ENCODE measurements at regions of chr15 and their contacts with region 1.

Region 1: GRCh38 chr15:25508369-25509002 is 69.7 kb upstream of the UBE3A start:
- DNase-seq: peak; percentile 6
- H3K4me3 Mint-ChIP-seq: no peak overlapping the region
- H3K27ac Mint-ChIP-seq: no peak overlapping the region
- H3K4me1 Mint-ChIP-seq: no peaks in the 10 kb centered on the region
- H3K27me3 Mint-ChIP-seq: peaks cover 2% of the 10 kb centered on the region

Region 2: GRCh38 chr15:25179673-25180511 is 328.6 kb before region 1 on chr15:
- CTCF ChIA-PET with region 1: no interaction called
- intact Hi-C with region 1: loop called (anchors 10 kb)
- DNase-seq: no peak
- H3K4me3 Mint-ChIP-seq: no peak overlapping the region
- H3K27ac Mint-ChIP-seq: no peak overlapping the region
- H3K4me1 Mint-ChIP-seq: no peaks in the 10 kb centered on the region
- H3K27me3 Mint-ChIP-seq: no peaks in the 10 kb centered on the region

Region 3: DNA sequence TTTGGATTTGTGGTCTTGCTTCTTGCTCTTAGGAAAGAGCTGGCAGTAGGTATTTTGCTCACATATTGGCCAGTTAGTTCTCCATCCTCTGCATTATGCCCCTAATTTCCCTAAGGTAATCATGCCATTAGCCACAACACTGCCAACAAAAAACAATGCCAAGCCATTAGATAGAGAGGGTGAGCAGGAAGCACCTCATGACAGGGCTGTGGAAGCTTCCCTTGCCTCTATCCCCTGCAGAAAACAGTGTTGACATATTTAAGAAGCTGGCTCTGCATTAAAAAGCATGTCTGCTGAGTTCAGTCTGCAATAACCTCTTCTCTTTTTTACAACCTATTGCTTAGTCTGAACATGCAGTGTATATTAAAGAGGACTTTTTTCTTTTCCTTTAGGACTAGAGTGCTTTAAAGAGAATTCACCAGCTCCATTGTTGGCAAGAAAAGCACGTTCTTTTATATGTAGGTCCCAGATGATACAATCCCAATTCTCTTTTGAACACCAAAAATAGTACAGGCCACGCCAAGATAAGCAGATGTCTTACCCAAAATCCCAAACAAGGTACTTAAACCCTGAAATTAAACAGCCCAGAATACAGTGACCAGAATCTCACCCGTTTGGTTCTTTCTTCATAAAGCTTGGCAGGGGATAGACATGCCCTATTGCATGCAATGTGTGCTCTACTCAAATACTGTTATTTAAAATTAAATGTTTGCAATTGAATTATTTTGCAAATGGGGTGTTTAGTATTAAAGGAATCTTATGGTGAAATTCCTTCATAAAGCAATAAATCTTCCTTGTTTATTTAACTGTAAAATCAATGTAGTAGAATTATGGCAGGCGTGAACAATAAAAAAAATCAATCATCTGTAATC is 24.0 kb after region 1 on chr15:
- CTCF ChIA-PET with region 1: no interaction called
- intact Hi-C with region 1: no loop called
- DNase-seq: no peak
- H3K4me3 Mint-ChIP-seq: no peak overlapping the region
- H3K27ac Mint-ChIP-seq: no peak overlapping the region
- H3K4me1 Mint-ChIP-seq: no peaks in the 10 kb centered on the region
- H3K27me3 Mint-ChIP-seq: no peaks in the 10 kb centered on the region

Region 4: GRCh38 chr15:25556136-25556535 is 47.6 kb after region 1 on chr15:
- CTCF ChIA-PET with region 1: no interaction called
- intact Hi-C with region 1: no loop called
- DNase-seq: no peak
- H3K4me3 Mint-ChIP-seq: no peak overlapping the region
- H3K27ac Mint-ChIP-seq: no peak overlapping the region
- H3K4me1 Mint-ChIP-seq: no peaks in the 10 kb centered on the region
- H3K27me3 Mint-ChIP-seq: peaks cover 3% of the 10 kb centered on the region

Region 5: GRCh38 chr15:25693321-25694237 is 185.1 kb after region 1 on chr15:
- CTCF ChIA-PET with region 1: no interaction called
- intact Hi-C with region 1: loop called (anchors 5 kb)
- DNase-seq: peak; percentile 59
- H3K4me3 Mint-ChIP-seq: no peak overlapping the region
- H3K27ac Mint-ChIP-seq: no peak overlapping the region
- H3K4me1 Mint-ChIP-seq: no peaks in the 10 kb centered on the region
- H3K27me3 Mint-ChIP-seq: no peaks in the 10 kb centered on the region

Region 6: GRCh38 chr15:26095710-26096330 is 587.3 kb after region 1 on chr15:
- CTCF ChIA-PET with region 1: no interaction called
- intact Hi-C with region 1: loop called (anchors 5 kb)
- DNase-seq: no peak
- H3K4me3 Mint-ChIP-seq: no peak overlapping the region
- H3K27ac Mint-ChIP-seq: no peak overlapping the region
- H3K4me1 Mint-ChIP-seq: no peaks in the 10 kb centered on the region
- H3K27me3 Mint-ChIP-seq: peaks cover 13% of the 10 kb centered on the region

Region 7: GRCh38 chr15:26260517-26261133 is 752.1 kb after region 1 on chr15:
- CTCF ChIA-PET with region 1: interaction called, 8 read pairs
- intact Hi-C with region 1: loop called (anchors 1 kb)
- DNase-seq: peak; percentile 38
- H3K4me3 Mint-ChIP-seq: no peak overlapping the region
- H3K27ac Mint-ChIP-seq: no peak overlapping the region
- H3K4me1 Mint-ChIP-seq: no peaks in the 10 kb centered on the region
- H3K27me3 Mint-ChIP-seq: peaks cover 13% of the 10 kb centered on the region

Region 8: GRCh38 chr15:26864664-26865191 is 1356.2 kb after region 1 on chr15:
- CTCF ChIA-PET with region 1: interaction called, 3 read pairs
- intact Hi-C with region 1: loop called (anchors 5 kb)
- DNase-seq: peak; percentile 27
- H3K4me3 Mint-ChIP-seq: no peak overlapping the region
- H3K27ac Mint-ChIP-seq: no peak overlapping the region
- H3K4me1 Mint-ChIP-seq: no peaks in the 10 kb centered on the region
- H3K27me3 Mint-ChIP-seq: peaks cover 37% of the 10 kb centered on the region

Measured in activated naive CD4-positive, alpha-beta T cell treated with anti-CD3 and anti-CD28 coated beads for 36 hours (primary cell).